GM10248 (cell line): ENCODE measurements at regions of chr3 and their contacts with region 1.

Region 1: GRCh38 chr3:160605315-160605714 is 39.9 kb upstream of the KPNA4 start:
- DNase-seq: no peak
- CTCF ChIP-seq: no peak

Region 2: GRCh38 chr3:160346511-160346910 is 258.8 kb before region 1 on chr3:
- CTCF ChIA-PET with region 1: no interaction called
- POLR2A ChIA-PET with region 1: no interaction called
- DNase-seq: no peak
- CTCF ChIP-seq: no peak

Region 3: GRCh38 chr3:160616716-160617115 is 11.4 kb after region 1 on chr3:
- CTCF ChIA-PET with region 1: interaction called, 10 read pairs
- POLR2A ChIA-PET with region 1: no interaction called
- DNase-seq: no peak
- CTCF ChIP-seq: no peak